ENCODE measurements at regions of chr10 and their contacts with region 1.

Region 1: GRCh38 chr10:49153971-49154370 is 20.1 kb upstream of the FAM170B start:
- DNase-seq: no peak
- ATAC-seq: peak; percentile 65
- H3K4me3 ChIP-seq: no peak overlapping the region
- H3K27ac ChIP-seq: no peak overlapping the region
- H3K4me1 ChIP-seq: peaks cover 15 to 26% of the 10 kb centered on the region in 2 experiments; a peak in 3 of 5 replicates
- H3K27me3 ChIP-seq: no peaks in the 10 kb centered on the region
- CTCF ChIP-seq: no peak
- EP300 ChIP-seq: no peak
- POLR2A ChIP-seq: no peak
- RAD21 ChIP-seq: no peak

Region 2: DNA sequence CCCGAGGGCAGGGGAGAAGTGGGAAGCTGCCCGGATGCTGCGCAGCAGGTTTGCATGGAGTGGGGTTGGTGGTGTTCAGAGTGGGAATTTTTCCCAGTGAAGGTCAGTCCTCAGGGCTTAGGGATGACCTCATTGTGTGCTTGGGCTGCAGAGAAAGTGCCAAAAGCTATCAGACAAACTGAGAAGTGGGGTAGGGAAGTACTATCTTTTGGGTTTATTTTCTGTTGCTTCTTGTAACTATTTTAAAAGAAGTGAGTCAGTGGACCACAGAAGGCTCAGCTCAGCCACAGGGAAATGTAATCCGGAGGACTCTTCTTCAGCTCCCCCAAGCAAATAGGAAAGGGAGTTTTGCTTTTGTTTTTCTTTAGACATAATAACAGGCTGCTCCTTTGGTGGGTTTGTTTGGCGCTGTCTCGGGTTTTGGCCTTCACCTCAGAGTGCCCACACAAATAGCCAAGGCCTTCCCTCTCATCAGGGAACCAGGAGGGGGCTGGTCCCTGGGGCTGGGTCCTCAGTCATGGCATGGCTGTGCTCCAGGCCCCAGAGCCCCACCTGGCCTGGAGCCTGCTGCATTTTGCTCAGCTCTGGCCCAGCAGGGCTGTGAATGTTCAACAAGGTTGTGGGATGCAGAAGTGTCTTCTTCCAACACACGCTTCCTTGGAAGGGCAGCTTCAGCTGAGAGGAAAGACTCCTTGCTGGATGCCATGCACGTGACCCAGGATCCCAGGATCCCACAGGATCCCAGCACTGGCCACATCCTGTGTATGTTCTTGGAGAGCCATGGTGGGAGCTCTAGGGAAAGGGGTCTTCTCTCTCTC is 14.7 kb before region 1 on chr10:
- CTCF ChIA-PET with region 1: no interaction called
- POLR2A ChIA-PET with region 1: interaction called, 19 read pairs
- in situ Hi-C with region 1: no loop called
- intact Hi-C with region 1: no loop called
- DNase-seq: no peak
- ATAC-seq: no peak
- H3K4me3 ChIP-seq: no peak overlapping the region
- H3K27ac ChIP-seq: no peak overlapping the region
- H3K4me1 ChIP-seq: peaks cover 0 to 3% of the 10 kb centered on the region in 2 experiments; a peak in 2 of 5 replicates
- H3K27me3 ChIP-seq: no peaks in the 10 kb centered on the region
- CTCF ChIP-seq: no peak
- EP300 ChIP-seq: no peak
- POLR2A ChIP-seq: no peak
- RAD21 ChIP-seq: no peak